ENCODE measurements at regions of chr15 and their contacts with region 1.

Region 1: GRCh38 chr15:48025118-48025517 is 95.7 kb upstream of the SLC24A5 start:
- DNase-seq: peak; percentile 14
- ATAC-seq: no peak
- H3K4me3 ChIP-seq: no peak overlapping the region
- H3K27ac ChIP-seq: no peak overlapping the region
- H3K4me1 ChIP-seq: no peaks in the 10 kb centered on the region
- H3K27me3 ChIP-seq: 0 out of 2 replicates have a peak, but pooled peaks cover 4% of the 10 kb centered on the region
- CTCF ChIP-seq: peak; percentile 34

Region 2: GRCh38 chr15:47773163-47773562 is 252.0 kb before region 1 on chr15:
- CTCF ChIA-PET with region 1: no interaction called
- POLR2A ChIA-PET with region 1: no interaction called
- intact Hi-C with region 1: no loop called
- DNase-seq: peak; percentile 4
- ATAC-seq: no peak
- H3K4me3 ChIP-seq: no peak overlapping the region
- H3K27ac ChIP-seq: no peak overlapping the region
- H3K4me1 ChIP-seq: 0 out of 2 replicates have a peak, but pooled peaks cover 3% of the 10 kb centered on the region
- H3K27me3 ChIP-seq: no peaks in the 10 kb centered on the region
- CTCF ChIP-seq: no peak

Region 3: GRCh38 chr15:47803767-47804166 is 221.4 kb before region 1 on chr15:
- CTCF ChIA-PET with region 1: no interaction called
- POLR2A ChIA-PET with region 1: no interaction called
- intact Hi-C with region 1: no loop called
- DNase-seq: no peak
- ATAC-seq: 0 out of 2 replicates have a peak, but pooled peaks have one; percentile 15
- H3K4me3 ChIP-seq: no peak overlapping the region
- H3K27ac ChIP-seq: no peak overlapping the region
- H3K4me1 ChIP-seq: peaks cover 4% of the 10 kb centered on the region; the same call in 1 of the 2 replicates
- H3K27me3 ChIP-seq: no peaks in the 10 kb centered on the region
- CTCF ChIP-seq: no peak

Region 4: GRCh38 chr15:48084759-48085590 is 59.9 kb after region 1 on chr15:
- CTCF ChIA-PET with region 1: no interaction called
- POLR2A ChIA-PET with region 1: no interaction called
- intact Hi-C with region 1: loop called (anchors 1 kb)
- DNase-seq: peak; percentile 37
- ATAC-seq: peak; percentile 63
- H3K4me3 ChIP-seq: no peak overlapping the region
- H3K27ac ChIP-seq: no peak overlapping the region
- H3K4me1 ChIP-seq: no peaks in the 10 kb centered on the region
- H3K27me3 ChIP-seq: peaks cover 17% of the 10 kb centered on the region
- CTCF ChIP-seq: peak; percentile 60

Measured in PC-3 (cell line).